Ascending aorta (tissue), 2 donors: ENCODE measurements at regions of chr20 and their contacts with region 1.

Region 1: DNA sequence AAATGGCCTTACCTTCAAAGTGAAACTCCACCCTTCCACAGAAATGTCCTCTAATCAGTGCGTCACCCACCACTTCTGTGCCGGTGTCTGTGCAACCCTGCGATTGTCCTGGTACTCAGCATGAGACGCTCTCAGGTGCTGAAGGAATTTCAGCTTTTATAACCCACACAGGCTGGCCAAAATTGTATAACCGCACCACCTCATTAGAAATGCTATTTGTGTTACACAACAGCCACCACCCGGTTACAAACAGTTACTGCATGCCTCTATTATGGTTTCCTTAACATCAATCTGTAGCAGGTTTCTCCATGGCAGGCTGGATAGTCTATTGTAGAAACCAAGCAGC is 51.5 kb downstream of the SLC23A2 start:
- DNase-seq: no peak
- H3K4me3 ChIP-seq: no peak overlapping the region
- H3K27ac ChIP-seq: peak overlapping the region in 1 of 2 donors; percentile 77
- H3K4me1 ChIP-seq: peaks cover 5 to 18% of the 10 kb centered on the region in 2 donors
- H3K27me3 ChIP-seq: no peaks in the 10 kb centered on the region
- CTCF ChIP-seq: peak; percentile 60 to 71 (median 67)

Region 2: DNA sequence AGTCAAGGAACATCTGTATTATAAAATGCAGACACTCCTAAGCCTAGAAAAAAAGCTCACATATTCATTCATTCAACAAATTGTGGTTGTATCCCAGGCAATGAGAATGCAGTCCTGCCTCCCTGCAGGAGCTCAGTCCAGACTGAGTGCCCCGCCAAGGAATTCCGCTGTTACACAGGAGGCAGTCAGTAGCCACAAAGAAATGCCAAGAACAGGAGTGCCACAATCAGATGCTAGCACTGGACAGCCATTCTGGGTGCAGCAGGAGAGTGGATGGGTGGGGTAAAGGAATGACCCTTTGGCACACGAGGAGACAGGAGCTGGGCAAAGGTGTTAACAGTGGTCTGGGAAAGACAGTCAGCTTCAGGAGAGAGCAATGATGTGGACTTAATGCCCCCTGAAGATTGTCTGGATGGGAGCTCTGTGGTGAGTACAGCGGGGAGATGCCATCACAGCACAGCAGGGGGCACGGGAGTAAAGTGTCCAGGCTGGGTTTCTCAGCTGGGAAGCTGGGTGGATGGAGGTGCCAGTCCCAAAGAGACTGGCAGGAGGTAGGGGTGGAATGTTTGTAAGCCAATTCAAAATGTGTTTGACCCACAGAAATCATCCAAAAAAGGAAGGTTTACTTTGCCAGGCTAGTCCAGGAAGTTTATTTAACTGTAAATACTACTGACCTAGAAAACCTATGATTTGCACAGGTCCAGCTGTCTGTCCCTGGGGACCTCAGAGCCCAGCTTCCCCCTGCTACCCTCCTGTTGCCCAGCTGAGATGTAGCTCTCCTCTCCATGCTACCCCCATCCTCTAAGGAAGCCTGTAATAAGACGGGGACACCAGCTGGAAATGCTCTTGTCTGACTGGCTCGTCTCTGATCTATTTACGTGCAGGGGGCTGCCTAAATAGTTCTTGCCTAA is 32.6 kb before region 1 on chr20:
- intact Hi-C with region 1: loop called (anchors 2 kb)
- DNase-seq: no peak
- H3K4me3 ChIP-seq: peak overlapping the region in 1 of 2 donors; percentile 1
- H3K27ac ChIP-seq: peak overlapping the region; percentile 49 to 63
- H3K4me1 ChIP-seq: peaks cover 4 to 18% of the 10 kb centered on the region in 2 donors
- H3K27me3 ChIP-seq: no peaks in the 10 kb centered on the region
- CTCF ChIP-seq: peak; percentile 7 to 40 (median 26)

Region 3: DNA sequence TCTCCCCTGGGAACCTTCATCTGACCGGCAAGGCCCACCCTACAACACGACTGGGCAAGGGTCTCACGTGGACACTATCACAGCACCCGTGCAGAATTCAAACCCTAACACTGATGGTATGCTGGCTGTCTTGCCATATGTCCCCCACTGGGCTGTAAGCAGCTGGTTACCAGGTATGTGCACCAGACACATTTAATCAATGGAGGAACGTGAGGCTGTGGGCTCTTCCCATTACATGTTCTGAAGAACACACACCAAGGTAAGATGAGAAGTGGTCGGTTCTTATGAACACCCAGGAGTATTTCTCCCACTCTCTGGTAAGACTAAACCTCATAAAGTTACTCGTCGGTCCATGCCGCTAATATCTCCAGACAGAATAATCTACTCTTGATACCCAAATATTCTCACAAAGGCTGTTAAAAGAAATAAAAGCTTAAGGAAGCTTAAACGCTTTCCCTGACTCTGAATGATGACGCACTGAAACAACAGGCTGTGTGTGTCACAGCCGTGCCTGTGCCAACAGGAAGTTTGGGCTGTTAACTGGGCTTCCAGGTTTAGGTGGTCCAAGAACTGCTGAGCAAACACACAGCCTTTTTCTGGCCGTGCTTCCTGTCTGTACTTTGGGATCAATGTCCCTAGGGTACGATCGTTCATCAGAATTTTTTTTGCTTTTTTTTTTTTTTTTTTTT is 23.8 kb before region 1 on chr20:
- intact Hi-C with region 1: loop called (anchors 2 kb)
- DNase-seq: peak; percentile 57 to 91
- H3K4me3 ChIP-seq: peak overlapping the region; percentile 1 to 37
- H3K27ac ChIP-seq: peak overlapping the region; percentile 86 to 87
- H3K4me1 ChIP-seq: peaks cover 6 to 18% of the 10 kb centered on the region in 2 donors
- H3K27me3 ChIP-seq: no peaks in the 10 kb centered on the region
- CTCF ChIP-seq: no peak

Region 4: DNA sequence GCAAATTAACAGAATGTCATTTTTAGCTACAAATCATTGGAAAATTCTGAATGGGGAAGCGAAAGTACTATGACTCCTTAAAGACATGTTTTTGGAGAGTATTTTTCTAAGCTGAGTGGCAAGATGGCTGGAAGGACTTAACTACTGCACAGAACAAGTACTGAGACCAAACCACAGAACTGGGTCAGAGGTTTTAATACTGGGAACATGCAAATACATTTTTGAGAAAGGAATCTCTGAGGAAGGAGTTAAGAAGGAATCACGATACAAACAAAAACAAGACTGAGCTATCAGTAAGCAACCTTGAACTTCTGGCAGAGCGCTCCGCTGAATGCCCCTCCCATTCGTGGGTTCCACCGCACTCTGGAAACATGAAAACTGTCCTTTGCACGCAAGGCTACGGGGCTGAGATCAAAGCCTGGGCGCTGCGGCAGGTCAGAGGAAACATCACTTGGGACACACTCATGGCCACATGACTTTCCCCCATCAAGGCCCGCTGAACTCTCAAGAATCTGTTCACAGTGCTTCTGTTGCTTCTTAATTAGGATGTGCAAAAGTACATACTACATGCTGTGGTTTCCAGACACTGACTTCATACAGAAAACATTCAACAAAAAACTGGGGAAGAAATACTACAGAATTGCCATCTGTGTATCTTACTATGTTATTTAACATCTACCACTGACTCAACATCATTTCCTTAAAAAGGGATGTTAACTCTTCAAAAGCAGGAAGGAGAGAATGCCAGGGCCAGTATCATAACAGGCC is 23.7 kb after region 1 on chr20:
- intact Hi-C with region 1: no loop called
- DNase-seq: peak in 1 of 2 donors; percentile 66
- H3K4me3 ChIP-seq: peak overlapping the region; percentile 26 to 48
- H3K27ac ChIP-seq: peak overlapping the region; percentile 49 to 66
- H3K4me1 ChIP-seq: peaks cover 5 to 12% of the 10 kb centered on the region in 2 donors
- H3K27me3 ChIP-seq: no peaks in the 10 kb centered on the region
- CTCF ChIP-seq: no peak